SK-N-SH (cell line): ENCODE measurements at regions of chr1 and their contacts with region 1.

Region 1: GRCh38 chr1:183432548-183432875 is 14.3 kb upstream of the NMNAT2 start:
- DNase-seq: no peak
- H3K4me3 ChIP-seq: no peak overlapping the region
- H3K27ac ChIP-seq: no peak overlapping the region
- H3K4me1 ChIP-seq: no peaks in the 10 kb centered on the region
- H3K27me3 ChIP-seq: no peaks in the 10 kb centered on the region
- CTCF ChIP-seq: no peak
- EP300 ChIP-seq: no peak
- RAD21 ChIP-seq: no peak

Region 2: GRCh38 chr1:183416850-183417771 is 15.4 kb before region 1 on chr1:
- CTCF ChIA-PET with region 1: interaction called, 16 read pairs
- POLR2A ChIA-PET with region 1: no interaction called
- DNase-seq: peak; percentile 83
- H3K4me3 ChIP-seq: peak overlapping the region; percentile 50 to 60
- H3K27ac ChIP-seq: peak overlapping the region in 1 of 2 experiments; percentile 67; a peak in 2 of 4 replicates
- H3K4me1 ChIP-seq: peaks cover 7 to 8% of the 10 kb centered on the region in 2 experiments; a peak in 2 of 4 replicates
- H3K27me3 ChIP-seq: peaks cover 34% of the 10 kb centered on the region
- CTCF ChIP-seq: no peak
- EP300 ChIP-seq: no peak
- RAD21 ChIP-seq: no peak

Region 3: GRCh38 chr1:183444243-183444642 is 11.7 kb after region 1 on chr1:
- CTCF ChIA-PET with region 1: no interaction called
- POLR2A ChIA-PET with region 1: no interaction called
- DNase-seq: no peak
- H3K4me3 ChIP-seq: no peak overlapping the region
- H3K27ac ChIP-seq: no peak overlapping the region
- H3K4me1 ChIP-seq: no peaks in the 10 kb centered on the region; a peak in 1 of 4 replicates
- H3K27me3 ChIP-seq: no peaks in the 10 kb centered on the region; the same call in 1 of the 2 replicates
- CTCF ChIP-seq: no peak
- EP300 ChIP-seq: no peak
- RAD21 ChIP-seq: no peak